ENCODE measurements at regions of chr1 and their contacts with region 1.

Region 1: DNA sequence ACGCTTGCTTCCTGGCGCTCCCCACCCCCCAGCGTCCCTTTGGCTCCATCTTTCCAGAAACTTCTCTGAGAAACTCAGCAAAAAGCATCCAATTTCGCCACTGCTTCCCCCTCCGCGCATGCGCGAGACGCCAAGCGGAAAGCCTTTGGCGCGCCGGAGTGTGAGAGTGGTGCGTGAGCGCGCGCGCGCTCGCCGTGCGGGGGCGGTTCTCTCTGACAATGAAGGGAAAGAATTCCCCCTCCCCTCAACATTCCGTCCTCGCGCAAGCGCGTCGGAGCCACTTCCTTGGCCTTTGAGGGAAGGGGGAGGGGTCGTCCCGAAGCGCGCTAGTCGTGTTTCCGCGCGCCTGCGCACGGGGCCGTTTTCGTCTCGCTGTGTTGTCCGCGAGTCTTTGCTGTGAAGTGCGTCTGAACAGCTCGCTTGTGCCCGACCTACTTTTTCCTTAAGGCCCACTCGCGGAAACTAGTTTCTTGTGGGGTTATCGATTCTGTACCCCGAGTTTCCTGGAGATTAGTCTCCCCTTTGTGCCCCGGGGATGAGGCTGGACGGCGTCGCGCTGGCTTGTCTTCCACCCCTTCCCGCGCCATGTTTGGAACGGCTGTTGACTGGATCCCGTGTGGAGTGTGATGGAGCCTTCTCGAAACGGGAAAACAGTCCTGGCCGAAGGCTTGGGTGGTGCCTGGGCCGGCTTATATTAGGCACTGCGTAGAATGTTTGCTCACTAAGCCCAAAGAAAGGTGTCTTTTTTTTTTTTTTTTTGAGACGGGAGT is 11.6 kb upstream of the SPEN start:
- DNase-seq: peak; percentile 96 to 100 (median 99)
- ATAC-seq: peak; percentile 62
- H3K4me3 ChIP-seq: peak overlapping the region; percentile 83 to 84
- H3K4me3 Mint-ChIP-seq: peak overlapping the region; percentile 96
- H3K27ac ChIP-seq: peak overlapping the region; percentile 83 to 99
- H3K27ac Mint-ChIP-seq: peak overlapping the region; percentile 99
- H3K4me1 ChIP-seq: peaks cover 20% of the 10 kb centered on the region
- H3K4me1 Mint-ChIP-seq: peaks cover 23% of the 10 kb centered on the region
- H3K27me3 ChIP-seq: no peaks in the 10 kb centered on the region
- H3K27me3 Mint-ChIP-seq: no peaks in the 10 kb centered on the region
- CTCF ChIP-seq: no peak

Region 2: DNA sequence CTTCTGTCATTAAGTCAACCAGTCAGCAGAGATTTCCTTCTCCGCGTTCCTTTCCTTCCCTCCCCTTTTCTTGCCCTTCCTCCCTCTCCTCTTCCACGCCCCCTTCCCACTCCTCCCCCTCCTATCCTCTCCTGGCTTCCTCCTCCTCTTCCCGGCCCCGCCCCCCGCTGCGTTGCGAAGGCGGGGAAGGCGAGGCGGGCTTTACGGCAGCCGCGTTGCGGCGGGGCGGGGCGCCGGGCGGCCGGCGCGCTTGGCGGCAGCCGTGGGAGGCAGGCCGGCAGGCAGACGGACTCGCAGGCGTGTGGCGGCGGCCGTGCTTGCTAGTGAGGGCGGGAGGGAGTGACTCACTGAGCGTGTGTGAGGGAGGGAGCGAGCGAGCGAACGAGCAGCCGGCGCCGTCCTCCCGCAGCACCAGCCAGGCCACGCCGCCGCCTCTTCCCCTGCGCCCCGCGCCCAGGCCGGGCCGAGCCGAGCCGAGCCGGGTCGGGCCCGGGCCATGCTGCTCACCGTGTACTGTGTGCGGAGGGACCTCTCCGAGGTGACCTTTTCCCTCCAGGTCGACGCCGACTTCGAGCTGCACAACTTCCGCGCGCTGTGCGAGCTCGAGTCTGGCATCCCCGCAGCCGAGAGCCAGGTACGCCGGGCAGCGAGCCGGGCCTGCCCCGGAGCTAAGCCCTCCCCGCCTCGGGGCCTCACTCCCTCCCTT is 218.6 kb before region 1 on chr1 and contains the start of gene DDI2:
- CTCF ChIA-PET with region 1: no interaction called
- POLR2A ChIA-PET with region 1: no interaction called
- intact Hi-C with region 1: loop called in 1 of 2 experiments (anchors 10 kb)
- DNase-seq: peak; percentile 83 to 96 (median 92)
- ATAC-seq: peak; percentile 88
- H3K4me3 ChIP-seq: peak within 1 kb of the TSS; percentile 83 to 89
- H3K4me3 Mint-ChIP-seq: peak within 1 kb of the TSS; percentile 94
- H3K27ac ChIP-seq: peak within 1 kb of the TSS; percentile 73 to 91
- H3K27ac Mint-ChIP-seq: peak within 1 kb of the TSS; percentile 94
- H3K4me1 ChIP-seq: peaks cover 44% of the 10 kb centered on the region
- H3K4me1 Mint-ChIP-seq: peaks cover 46% of the 10 kb centered on the region
- H3K27me3 ChIP-seq: no peaks in the 10 kb centered on the region
- H3K27me3 Mint-ChIP-seq: no peaks in the 10 kb centered on the region
- CTCF ChIP-seq: no peak
- total RNA-seq, gene DDI2: 34.7 to 37.7 TPM

Region 3: GRCh38 chr1:15825800-15826199 is 10.1 kb before region 1 on chr1:
- CTCF ChIA-PET with region 1: interaction called, 5 read pairs
- POLR2A ChIA-PET with region 1: interaction called, 15 read pairs
- intact Hi-C with region 1: no loop called
- DNase-seq: no peak
- ATAC-seq: no peak
- H3K4me3 ChIP-seq: no peak overlapping the region
- H3K4me3 Mint-ChIP-seq: no peak overlapping the region
- H3K27ac ChIP-seq: no peak overlapping the region
- H3K27ac Mint-ChIP-seq: no peak overlapping the region
- H3K4me1 ChIP-seq: peaks cover 5% of the 10 kb centered on the region
- H3K4me1 Mint-ChIP-seq: peaks cover 7% of the 10 kb centered on the region
- H3K27me3 ChIP-seq: no peaks in the 10 kb centered on the region
- H3K27me3 Mint-ChIP-seq: no peaks in the 10 kb centered on the region
- CTCF ChIP-seq: no peak

Region 4: GRCh38 chr1:15918962-15919715 is 83.2 kb after region 1 on chr1:
- CTCF ChIA-PET with region 1: no interaction called
- POLR2A ChIA-PET with region 1: interaction called, 7 read pairs
- intact Hi-C with region 1: loop called in 1 of 2 experiments (anchors 5 kb)
- DNase-seq: peak in 7 of 9 experiments; percentile 16 to 76 (median 48)
- ATAC-seq: peak; percentile 82
- H3K4me3 ChIP-seq: no peak overlapping the region
- H3K4me3 Mint-ChIP-seq: no peak overlapping the region
- H3K27ac ChIP-seq: peak overlapping the region in 1 of 2 experiments; percentile 12
- H3K27ac Mint-ChIP-seq: peak overlapping the region; percentile 34
- H3K4me1 ChIP-seq: peaks cover 23% of the 10 kb centered on the region
- H3K4me1 Mint-ChIP-seq: peaks cover 32% of the 10 kb centered on the region
- H3K27me3 ChIP-seq: no peaks in the 10 kb centered on the region
- H3K27me3 Mint-ChIP-seq: no peaks in the 10 kb centered on the region
- CTCF ChIP-seq: no peak

Region 5: DNA sequence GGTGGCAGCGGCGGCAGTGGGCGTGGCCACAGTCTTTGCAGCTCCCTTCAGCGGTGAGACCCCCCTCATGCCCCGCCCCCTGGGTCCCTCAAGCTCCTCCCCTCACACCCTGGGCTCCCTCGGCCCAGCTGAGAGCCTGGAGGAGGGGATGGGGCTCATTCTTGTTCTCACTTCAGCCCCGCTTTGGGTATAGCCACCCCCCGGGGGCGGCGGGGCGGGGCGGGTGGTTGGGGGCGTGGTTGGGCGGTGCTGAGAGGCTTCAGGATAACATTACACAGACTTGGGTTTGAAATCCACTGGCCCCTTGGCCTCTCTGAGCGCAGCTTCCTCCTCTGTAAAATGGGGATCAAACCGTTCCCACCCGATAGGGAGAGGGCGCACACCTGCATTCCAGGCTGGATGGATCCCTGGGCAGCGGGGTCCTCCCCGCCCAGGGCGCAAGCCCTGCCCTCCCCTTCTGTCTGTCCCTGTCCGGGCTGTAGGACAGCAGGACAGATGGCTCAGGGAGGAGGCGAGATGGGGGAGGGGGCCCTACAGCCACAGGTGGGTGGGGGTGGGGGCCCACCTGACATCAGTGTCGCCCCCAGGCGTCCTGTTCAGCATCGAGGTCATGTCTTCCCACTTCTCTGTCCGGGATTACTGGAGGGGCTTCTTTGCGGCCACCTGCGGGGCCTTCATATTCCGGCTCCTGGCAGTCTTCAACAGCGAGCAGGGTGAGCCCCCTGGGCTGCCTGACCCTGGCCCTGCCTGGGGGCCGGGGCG is 191.0 kb after region 1 on chr1:
- CTCF ChIA-PET with region 1: no interaction called
- POLR2A ChIA-PET with region 1: no interaction called
- intact Hi-C with region 1: no loop called
- DNase-seq: peak in 7 of 9 experiments; percentile 4 to 47 (median 39)
- ATAC-seq: peak; percentile 75
- H3K4me3 ChIP-seq: peak overlapping the region in 1 of 2 experiments; percentile 3
- H3K4me3 Mint-ChIP-seq: peak overlapping the region; percentile 39
- H3K27ac ChIP-seq: no peak overlapping the region
- H3K27ac Mint-ChIP-seq: no peak overlapping the region
- H3K4me1 ChIP-seq: peaks cover 6% of the 10 kb centered on the region
- H3K4me1 Mint-ChIP-seq: peaks cover 2% of the 10 kb centered on the region
- H3K27me3 ChIP-seq: peaks cover 0 to 6% of the 10 kb centered on the region in 2 experiments
- H3K27me3 Mint-ChIP-seq: peaks cover 23% of the 10 kb centered on the region
- CTCF ChIP-seq: no peak

Region 6: GRCh38 chr1:16351994-16352841 is 516.3 kb after region 1 on chr1 and contains the start of gene FBXO42:
- CTCF ChIA-PET with region 1: no interaction called
- POLR2A ChIA-PET with region 1: interaction called, 4 read pairs
- intact Hi-C with region 1: loop called in 1 of 2 experiments (anchors 2 kb)
- DNase-seq: peak; percentile 82 to 97 (median 91)
- ATAC-seq: peak; percentile 90
- H3K4me3 ChIP-seq: peak within 1 kb of the TSS; percentile 59 to 89
- H3K4me3 Mint-ChIP-seq: peak within 1 kb of the TSS; percentile 92
- H3K27ac ChIP-seq: peak within 1 kb of the TSS; percentile 74 to 96
- H3K27ac Mint-ChIP-seq: peak within 1 kb of the TSS; percentile 93
- H3K4me1 ChIP-seq: peaks cover 22% of the 10 kb centered on the region
- H3K4me1 Mint-ChIP-seq: peaks cover 33% of the 10 kb centered on the region
- H3K27me3 ChIP-seq: no peaks in the 10 kb centered on the region
- H3K27me3 Mint-ChIP-seq: no peaks in the 10 kb centered on the region
- CTCF ChIP-seq: peak; percentile 37
- total RNA-seq, gene FBXO42: 18.0 to 18.2 TPM

Region 7: GRCh38 chr1:16386454-16387113 is 550.7 kb after region 1 on chr1:
- CTCF ChIA-PET with region 1: no interaction called
- POLR2A ChIA-PET with region 1: no interaction called
- intact Hi-C with region 1: no loop called
- DNase-seq: peak in 1 of 9 experiments; percentile 48
- ATAC-seq: peak; percentile 57
- H3K4me3 ChIP-seq: no peak overlapping the region
- H3K4me3 Mint-ChIP-seq: peak overlapping the region; percentile 77
- H3K27ac ChIP-seq: peak overlapping the region in 1 of 2 experiments; percentile 39
- H3K27ac Mint-ChIP-seq: peak overlapping the region; percentile 81
- H3K4me1 ChIP-seq: peaks cover 62% of the 10 kb centered on the region
- H3K4me1 Mint-ChIP-seq: peaks cover 81% of the 10 kb centered on the region
- H3K27me3 ChIP-seq: no peaks in the 10 kb centered on the region
- H3K27me3 Mint-ChIP-seq: no peaks in the 10 kb centered on the region
- CTCF ChIP-seq: no peak

Measured in CD8-positive, alpha-beta T cell (primary cell).